ENCODE measurements at regions of chr7 and their contacts with region 1.

Region 1: DNA sequence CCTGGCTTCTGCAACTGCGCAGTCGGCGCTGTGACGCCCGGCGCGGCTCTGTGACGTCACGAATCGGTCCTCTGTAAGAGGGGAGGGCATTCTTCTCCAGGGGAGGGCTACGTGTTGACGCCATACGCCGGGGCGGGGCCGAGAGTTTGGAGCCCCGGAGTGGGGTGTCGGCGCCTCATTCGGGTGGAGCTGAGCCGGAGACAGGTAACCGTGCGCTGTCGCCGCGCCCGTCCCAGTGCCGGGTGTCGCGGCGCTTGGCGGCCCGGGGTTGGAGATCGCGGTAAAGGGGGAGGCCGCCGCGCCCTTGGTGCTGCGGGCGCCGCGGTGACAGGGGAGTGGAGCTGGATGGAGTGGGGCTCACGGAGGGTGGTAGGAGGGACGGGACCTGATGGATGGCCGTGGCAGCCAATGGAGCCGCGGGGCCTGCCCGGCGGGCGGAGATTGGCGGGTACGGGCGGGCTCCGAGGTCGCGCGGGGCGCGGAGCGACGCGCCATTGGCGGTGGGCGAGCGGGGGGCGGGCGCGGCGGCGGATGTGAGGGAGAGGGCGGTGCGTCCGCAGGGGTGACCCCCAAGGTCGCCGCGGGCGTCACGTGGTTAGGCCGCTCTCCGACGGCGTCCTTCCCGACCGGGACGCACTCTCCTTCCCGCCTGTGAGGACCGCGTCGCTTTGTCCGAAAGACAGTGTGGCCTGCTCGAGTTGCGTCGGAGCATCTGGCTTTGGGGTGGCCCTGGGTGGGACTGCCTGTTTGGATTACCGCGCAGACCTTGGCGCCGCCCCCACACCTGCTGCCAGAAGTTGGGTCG is at the start of gene OGDH:
- DNase-seq: peak; percentile 97 to 100 (median 99)
- ATAC-seq: peak; percentile 94 to 95
- H3K4me3 Mint-ChIP-seq: peak within 1 kb of the TSS; percentile 92 to 100 (median 98)
- H3K27ac Mint-ChIP-seq: peak within 1 kb of the TSS; percentile 96 to 100 (median 99)
- H3K4me1 Mint-ChIP-seq: peaks cover 11 to 52% (median 41%) of the 10 kb centered on the region in 4 donors
- H3K27me3 Mint-ChIP-seq: peaks cover 0 to 5% (median 0%) of the 10 kb centered on the region in 5 donors
- polyA plus RNA-seq, gene OGDH: 23.9 to 30.6 (median 25.6) TPM

Region 2: DNA sequence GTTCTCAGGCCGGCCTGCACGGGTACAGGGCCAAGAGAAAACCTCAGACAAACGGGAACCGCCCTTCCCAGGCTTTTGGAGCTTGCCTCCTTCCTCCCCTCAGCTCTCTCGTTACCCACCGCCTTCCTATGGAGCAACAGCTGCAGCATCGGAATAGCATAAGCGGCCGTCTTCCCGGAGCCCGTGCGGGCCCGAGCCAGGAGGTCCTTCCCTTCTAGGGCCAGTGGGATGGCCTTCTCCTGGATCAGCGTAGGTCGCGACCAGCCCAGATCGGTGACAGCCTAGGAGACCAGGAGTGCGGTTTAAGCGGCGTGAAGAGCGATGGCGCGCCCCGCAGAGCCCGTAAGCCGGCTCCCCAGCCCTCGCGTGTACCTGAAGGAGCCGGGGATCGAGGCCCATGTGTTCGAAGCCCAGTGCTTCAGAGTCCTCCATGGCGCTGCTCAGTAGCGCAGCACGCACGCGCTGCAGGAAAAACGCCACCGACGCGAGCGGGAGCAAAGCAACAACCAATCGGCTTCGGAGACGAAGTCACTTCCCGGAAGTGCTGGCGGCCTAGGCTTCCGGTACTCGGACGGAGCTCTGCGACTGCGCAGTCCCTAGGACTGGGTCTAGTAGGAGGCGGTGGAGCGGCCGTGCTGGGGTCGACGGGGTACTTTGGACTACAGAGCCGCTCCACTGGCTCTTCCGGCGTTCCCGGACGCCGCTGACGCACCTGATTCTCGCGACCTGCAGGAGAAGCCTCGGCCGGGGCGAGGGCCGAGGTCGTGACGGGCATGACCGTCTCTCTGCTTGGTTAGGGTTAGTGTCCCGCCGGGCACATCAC is 33.0 kb before region 1 on chr7 and contains the start of gene DDX56:
- POLR2A ChIA-PET with region 1: interaction called, 22 read pairs
- DNase-seq: peak; percentile 82 to 96 (median 89)
- ATAC-seq: peak; percentile 96 to 98
- H3K4me3 Mint-ChIP-seq: peak within 1 kb of the TSS; percentile 90 to 97 (median 96)
- H3K27ac Mint-ChIP-seq: peak within 1 kb of the TSS; percentile 96 to 99 (median 98)
- H3K4me1 Mint-ChIP-seq: peaks cover 21 to 49% (median 34%) of the 10 kb centered on the region in 4 donors
- H3K27me3 Mint-ChIP-seq: no peaks in the 10 kb centered on the region
- polyA plus RNA-seq, gene DDX56: 25.3 to 48.2 (median 41.1) TPM

Region 3: GRCh38 chr7:44631458-44632115 is 24.9 kb after region 1 on chr7:
- POLR2A ChIA-PET with region 1: interaction called, 47 read pairs
- DNase-seq: peak in 7 of 10 donors; percentile 7 to 62 (median 30)
- ATAC-seq: peak; percentile 61 to 71
- H3K4me3 Mint-ChIP-seq: peak overlapping the region in 9 of 10 donors; percentile 48 to 80 (median 70)
- H3K27ac Mint-ChIP-seq: peak overlapping the region; percentile 91 to 97 (median 94)
- H3K4me1 Mint-ChIP-seq: peaks cover 24 to 78% (median 60%) of the 10 kb centered on the region in 4 donors
- H3K27me3 Mint-ChIP-seq: no peaks in the 10 kb centered on the region

Region 4: GRCh38 chr7:44748045-44748947 is 141.6 kb after region 1 on chr7 and contains the start of gene ZMIZ2:
- POLR2A ChIA-PET with region 1: interaction called, 28 read pairs
- DNase-seq: peak; percentile 81 to 99 (median 93)
- ATAC-seq: peak; percentile 82 to 85
- H3K4me3 Mint-ChIP-seq: peak within 1 kb of the TSS; percentile 80 to 95 (median 87)
- H3K27ac Mint-ChIP-seq: peak within 1 kb of the TSS; percentile 85 to 97 (median 90)
- H3K4me1 Mint-ChIP-seq: peaks cover 29 to 45% (median 40%) of the 10 kb centered on the region in 4 donors
- H3K27me3 Mint-ChIP-seq: no peaks in the 10 kb centered on the region
- polyA plus RNA-seq, gene ZMIZ2: 2.6 to 8.1 (median 4.9) TPM

Region 5: DNA sequence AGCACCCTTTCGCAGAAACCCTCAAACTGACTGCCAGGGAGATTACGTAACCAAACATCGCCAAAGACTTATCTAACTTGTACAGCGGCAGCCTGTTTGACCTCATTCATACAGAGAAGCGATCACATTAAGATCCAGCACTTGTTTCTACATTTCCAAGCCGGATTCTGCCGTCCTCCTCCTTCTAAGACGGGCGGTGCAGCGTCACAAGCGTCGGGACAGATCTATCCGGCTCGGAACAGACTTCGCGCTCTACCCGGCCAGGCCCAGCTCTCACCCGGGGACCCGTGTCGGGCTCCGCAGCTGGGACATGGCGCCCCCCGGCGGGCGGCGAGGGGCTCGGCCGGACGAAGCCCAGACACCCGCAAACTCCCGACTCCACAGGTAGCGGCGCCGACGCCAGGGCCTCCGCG is 240.9 kb after region 1 on chr7:
- POLR2A ChIA-PET with region 1: interaction called, 34 read pairs
- DNase-seq: peak; percentile 78 to 94 (median 88)
- ATAC-seq: peak; percentile 63 to 65
- H3K4me3 Mint-ChIP-seq: peak overlapping the region; percentile 87 to 98 (median 94)
- H3K27ac Mint-ChIP-seq: peak overlapping the region; percentile 94 to 99 (median 98)
- H3K4me1 Mint-ChIP-seq: peaks cover 16 to 48% (median 37%) of the 10 kb centered on the region in 4 donors
- H3K27me3 Mint-ChIP-seq: peaks cover 0 to 3% (median 0%) of the 10 kb centered on the region in 5 donors

Measured in naive thymus-derived CD8-positive, alpha-beta T cell (primary cell).